ENCODE measurements at regions of chr14 and their contacts with region 1.

Region 1: DNA sequence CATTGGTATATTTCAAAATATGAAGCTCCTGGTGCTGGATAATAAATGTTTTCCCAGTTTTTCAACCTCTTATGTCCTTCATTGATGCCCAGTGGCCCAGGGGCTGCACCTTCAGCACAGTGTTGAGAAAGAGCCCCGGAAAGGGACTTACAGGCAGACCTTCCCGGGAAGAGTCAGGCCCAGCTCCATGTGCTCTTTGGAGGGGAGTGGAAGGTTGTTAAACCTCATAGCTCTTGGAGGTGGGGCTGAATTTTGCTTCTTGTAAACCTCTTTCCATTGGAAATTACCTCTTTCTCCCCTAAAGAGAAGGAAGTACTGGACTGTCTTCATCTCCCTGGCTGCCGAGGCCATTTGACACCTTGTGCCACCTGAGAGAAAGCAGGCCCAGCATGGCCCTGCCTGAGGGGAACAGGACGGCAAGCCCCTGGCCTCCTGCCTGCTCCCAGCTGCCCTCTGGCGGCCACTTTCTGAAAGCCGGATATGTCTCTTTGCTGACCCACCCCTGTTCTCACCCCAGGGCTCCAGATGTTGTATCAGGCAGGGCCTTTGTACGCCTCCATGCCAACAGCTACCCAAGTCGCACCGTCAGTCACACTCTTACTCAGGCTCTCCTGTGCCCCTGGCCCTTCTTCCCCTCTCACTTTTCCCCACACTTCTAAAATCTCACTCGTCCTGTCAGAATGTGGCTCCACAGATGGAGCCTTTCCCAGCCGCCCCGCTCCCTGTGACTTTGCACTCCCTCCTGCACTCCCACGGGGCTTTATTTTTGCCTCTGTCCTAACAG is 43.0 kb downstream of the EVL start:
- DNase-seq: no peak
- H3K4me3 ChIP-seq: no peak overlapping the region
- H3K27ac ChIP-seq: no peak overlapping the region
- H3K27me3 ChIP-seq: no peaks in the 10 kb centered on the region
- CTCF ChIP-seq: peak; percentile 91

Region 2: DNA sequence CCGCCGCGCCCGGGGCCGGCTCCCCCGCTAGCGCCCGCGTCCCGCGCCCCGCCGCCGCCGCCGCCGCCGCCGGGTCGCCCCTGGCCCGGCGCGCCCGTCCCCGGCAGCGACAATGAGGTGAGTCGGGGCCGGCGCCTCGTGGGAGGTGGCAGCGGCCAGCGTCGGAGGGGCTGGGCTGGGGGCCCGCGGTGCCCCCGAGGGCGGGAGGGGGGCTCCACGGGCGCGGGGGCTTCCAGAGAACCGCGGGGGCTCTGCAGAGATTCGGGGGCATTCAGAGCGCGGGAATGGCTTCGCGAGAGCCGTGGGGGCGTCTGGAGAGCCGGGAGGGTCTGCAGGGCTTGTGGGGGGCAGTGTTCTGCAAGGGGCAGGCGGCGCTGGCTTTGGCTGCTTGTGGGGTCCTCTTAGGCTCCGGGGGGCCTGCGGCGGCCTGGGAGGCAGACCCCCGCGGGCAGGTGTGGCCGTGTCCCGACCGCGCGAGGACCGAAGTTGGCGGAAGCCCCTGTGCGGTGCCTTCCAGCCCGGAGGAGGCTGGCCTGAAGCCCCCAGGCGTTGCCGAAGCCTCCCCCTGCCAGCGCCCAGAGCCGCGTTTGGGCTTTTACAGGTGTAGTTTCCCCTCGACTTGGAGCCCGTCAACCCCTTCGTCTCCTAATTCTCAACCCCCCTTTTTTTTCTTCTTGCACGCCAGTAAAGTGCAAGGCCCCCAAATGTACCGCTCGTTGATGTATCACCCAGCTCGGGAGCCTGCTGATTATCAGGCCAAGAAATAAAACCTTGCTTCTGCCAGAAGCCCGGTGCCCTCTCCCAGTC is 136.1 kb before region 1 on chr14:
- CTCF ChIA-PET with region 1: interaction called, 13 read pairs
- POLR2A ChIA-PET with region 1: no interaction called
- DNase-seq: no peak
- H3K4me3 ChIP-seq: peak overlapping the region; percentile 85
- H3K27ac ChIP-seq: no peak overlapping the region
- H3K27me3 ChIP-seq: no peaks in the 10 kb centered on the region
- CTCF ChIP-seq: no peak

Region 3: DNA sequence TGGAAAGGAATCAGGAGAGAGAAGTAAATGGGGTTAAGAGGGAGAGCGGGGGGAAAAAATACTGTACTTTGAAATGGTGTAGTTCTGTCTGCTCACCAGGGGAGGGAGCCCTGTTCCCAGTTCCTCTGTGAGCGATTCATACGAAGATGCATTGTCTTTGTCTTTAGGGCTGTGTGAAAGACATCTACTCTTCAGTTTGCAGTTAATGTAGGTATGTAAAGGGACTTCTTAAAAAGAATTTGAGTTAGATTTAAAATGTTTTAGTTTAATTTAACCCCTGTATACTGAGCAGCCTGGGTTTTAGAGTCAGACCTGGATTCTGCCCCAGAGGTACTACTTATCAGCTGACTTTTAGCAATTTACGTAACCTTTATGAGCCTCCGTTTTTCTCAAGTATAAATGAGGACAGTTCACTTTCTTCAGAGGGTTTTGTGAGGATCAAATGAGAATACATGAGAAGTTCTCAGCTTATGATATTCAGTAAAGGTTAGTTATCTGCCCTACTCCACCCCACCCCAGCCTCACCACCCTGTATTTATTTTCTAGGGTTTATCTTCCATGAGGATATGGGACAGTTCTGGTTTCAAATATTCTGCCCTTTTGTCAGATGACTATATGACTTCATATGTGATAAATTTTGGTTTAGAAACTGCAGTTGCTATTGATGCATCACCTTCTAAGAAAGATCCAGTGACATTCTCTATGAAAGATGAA is 125.5 kb before region 1 on chr14:
- CTCF ChIA-PET with region 1: interaction called, 137 read pairs
- POLR2A ChIA-PET with region 1: interaction called, 4 read pairs
- DNase-seq: peak; percentile 45
- H3K4me3 ChIP-seq: no peak overlapping the region
- H3K27ac ChIP-seq: no peak overlapping the region
- H3K27me3 ChIP-seq: no peaks in the 10 kb centered on the region
- CTCF ChIP-seq: peak; percentile 93

Region 4: DNA sequence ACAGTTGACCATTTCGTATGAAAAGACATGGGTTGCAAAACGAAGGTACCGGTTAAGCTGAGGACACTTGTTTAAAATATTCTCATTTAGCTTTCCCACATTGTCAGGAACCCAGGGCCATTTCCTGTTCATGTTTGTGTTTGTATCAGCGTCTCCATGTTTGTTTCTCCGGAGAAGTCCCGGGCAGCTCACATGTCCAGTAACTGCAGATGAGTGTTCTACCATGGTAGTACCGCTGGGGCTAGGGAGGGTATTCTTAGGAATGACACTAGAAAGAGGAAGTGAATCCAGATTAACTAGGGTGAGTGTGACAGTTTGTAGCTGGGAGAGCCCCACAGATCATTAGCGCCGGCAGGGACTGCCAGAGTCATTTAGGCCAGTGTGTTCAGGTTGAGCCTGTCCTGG is 93.0 kb before region 1 on chr14:
- CTCF ChIA-PET with region 1: interaction called, 11 read pairs
- POLR2A ChIA-PET with region 1: no interaction called
- DNase-seq: no peak
- H3K4me3 ChIP-seq: no peak overlapping the region
- H3K27ac ChIP-seq: peak overlapping the region; percentile 62
- H3K27me3 ChIP-seq: no peaks in the 10 kb centered on the region
- CTCF ChIP-seq: no peak

Region 5: DNA sequence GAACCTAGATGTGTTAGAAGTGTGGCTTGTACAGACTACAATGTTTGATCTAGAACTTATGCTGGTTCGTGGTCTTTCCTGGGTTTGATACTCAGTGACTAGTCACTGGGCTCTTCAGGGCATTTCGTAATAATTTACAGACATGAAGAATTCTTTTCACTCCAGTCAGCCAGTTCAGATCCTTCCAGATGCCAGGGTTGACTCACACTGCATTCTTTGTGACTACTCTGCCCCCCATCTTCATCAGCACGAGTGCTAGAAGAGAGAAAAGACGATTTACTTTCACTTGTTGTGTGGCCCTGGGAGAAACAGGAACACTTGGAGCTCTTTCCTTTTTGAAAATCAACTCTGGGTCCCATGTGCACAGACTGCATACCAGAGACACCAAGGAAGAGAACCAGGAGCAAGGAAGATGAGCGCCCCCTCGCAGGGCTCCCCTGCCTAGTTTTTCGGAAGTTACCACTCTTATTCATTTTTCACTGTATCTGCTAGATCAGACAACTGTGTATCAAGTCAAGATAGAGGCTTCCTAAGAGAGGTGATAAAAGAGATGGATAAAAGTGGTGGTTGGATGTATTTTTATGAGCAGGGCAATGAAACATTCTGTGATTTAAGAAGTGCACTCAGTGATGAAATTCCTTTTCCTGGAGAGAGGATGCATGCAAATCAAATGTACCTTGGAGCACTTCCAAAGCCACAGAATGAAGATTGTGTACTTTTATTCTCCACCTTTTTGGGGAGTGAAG is 76.5 kb before region 1 on chr14:
- CTCF ChIA-PET with region 1: interaction called, 13 read pairs
- POLR2A ChIA-PET with region 1: no interaction called
- DNase-seq: peak; percentile 95
- H3K4me3 ChIP-seq: peak overlapping the region; percentile 59
- H3K27ac ChIP-seq: peak overlapping the region; percentile 99
- H3K27me3 ChIP-seq: no peaks in the 10 kb centered on the region
- CTCF ChIP-seq: no peak

Region 6: GRCh38 chr14:100083706-100084105 is 24.5 kb before region 1 on chr14:
- CTCF ChIA-PET with region 1: interaction called, 13 read pairs
- POLR2A ChIA-PET with region 1: no interaction called
- DNase-seq: no peak
- H3K4me3 ChIP-seq: no peak overlapping the region
- H3K27ac ChIP-seq: no peak overlapping the region
- H3K27me3 ChIP-seq: no peaks in the 10 kb centered on the region
- CTCF ChIP-seq: no peak

Region 7: DNA sequence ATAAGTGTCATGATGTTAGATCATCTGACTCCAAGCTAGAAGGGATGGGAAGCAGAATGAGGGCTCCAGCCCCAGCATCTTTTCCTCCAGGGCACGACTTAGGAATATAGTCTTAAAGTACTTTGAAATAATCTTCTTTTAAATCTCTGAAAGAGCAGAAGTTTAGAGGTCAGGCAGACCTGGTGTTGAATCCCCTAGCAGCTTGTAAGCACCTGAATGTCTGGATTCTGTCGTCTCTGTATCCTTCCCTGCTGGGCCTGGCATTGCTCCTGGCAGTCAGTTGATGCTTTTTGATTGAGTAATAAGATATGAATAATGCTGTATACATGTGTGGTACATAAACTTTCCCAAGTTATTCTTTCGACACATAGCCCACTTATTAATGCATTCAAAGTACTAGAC is 11.7 kb before region 1 on chr14:
- CTCF ChIA-PET with region 1: interaction called, 18 read pairs
- POLR2A ChIA-PET with region 1: interaction called, 6 read pairs
- DNase-seq: no peak
- H3K4me3 ChIP-seq: no peak overlapping the region
- H3K27ac ChIP-seq: no peak overlapping the region
- H3K27me3 ChIP-seq: no peaks in the 10 kb centered on the region
- CTCF ChIP-seq: no peak

Region 8: GRCh38 chr14:100263144-100263543 is 154.9 kb after region 1 on chr14:
- CTCF ChIA-PET with region 1: no interaction called
- POLR2A ChIA-PET with region 1: no interaction called
- DNase-seq: no peak
- H3K4me3 ChIP-seq: no peak overlapping the region
- H3K27ac ChIP-seq: no peak overlapping the region
- H3K27me3 ChIP-seq: no peaks in the 10 kb centered on the region
- CTCF ChIP-seq: no peak